ENCODE measurements at regions of chr5 and their contacts with region 1.

Region 1: DNA sequence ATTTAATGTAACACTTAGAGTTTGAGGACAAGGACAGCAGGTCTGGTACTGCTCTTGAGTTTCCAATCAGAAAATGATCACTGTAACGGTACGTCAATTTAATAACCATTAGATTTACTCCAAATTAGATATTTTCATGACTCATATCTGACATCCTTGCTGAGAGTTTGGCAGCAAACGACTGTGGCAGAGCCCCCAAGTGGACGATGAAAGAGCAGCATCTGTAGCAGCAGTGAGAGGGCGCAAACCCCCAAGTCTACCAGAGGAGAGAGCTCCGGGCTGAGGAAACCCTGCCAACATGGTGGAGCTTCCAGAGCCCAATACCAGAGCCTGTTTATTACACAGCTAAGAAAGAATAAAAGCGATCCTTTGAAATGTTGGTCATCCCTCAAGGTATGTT is 73.2 kb upstream of the EPB41L4A start:
- DNase-seq: peak; percentile 55
- CTCF ChIP-seq: peak; percentile 49

Region 2: DNA sequence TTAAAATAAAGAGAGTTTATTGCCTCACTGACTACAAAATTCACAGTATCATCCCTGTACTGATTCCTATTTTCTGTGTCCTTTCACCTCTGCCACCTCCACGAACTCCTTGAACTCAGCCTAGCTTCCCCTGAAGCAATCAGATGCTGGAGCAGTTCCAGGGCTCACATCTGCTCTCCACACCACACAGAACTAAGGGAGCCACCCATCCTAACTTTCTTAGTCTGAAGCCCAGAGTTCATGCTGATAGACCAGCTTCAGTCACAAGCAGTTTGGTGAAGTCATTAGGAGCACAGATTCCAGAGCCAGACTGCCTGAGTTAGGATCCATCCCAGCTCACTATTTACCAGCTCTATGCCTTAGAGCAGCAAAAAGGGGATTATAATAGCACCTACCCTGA is 57.6 kb before region 1 on chr5:
- CTCF ChIA-PET with region 1: no interaction called
- POLR2A ChIA-PET with region 1: no interaction called
- DNase-seq: no peak
- CTCF ChIP-seq: no peak

Region 3: GRCh38 chr5:112479407-112479806 is 12.9 kb before region 1 on chr5:
- CTCF ChIA-PET with region 1: interaction called, 17 read pairs
- POLR2A ChIA-PET with region 1: no interaction called
- DNase-seq: no peak
- CTCF ChIP-seq: no peak

Measured in GM10248 (cell line).